Activated CD8-positive, alpha-beta T cell treated with anti-CD3 and anti-CD28 coated beads for 36 hours (primary cell): ENCODE measurements at regions of chr6 and their contacts with region 1.

Region 1: DNA sequence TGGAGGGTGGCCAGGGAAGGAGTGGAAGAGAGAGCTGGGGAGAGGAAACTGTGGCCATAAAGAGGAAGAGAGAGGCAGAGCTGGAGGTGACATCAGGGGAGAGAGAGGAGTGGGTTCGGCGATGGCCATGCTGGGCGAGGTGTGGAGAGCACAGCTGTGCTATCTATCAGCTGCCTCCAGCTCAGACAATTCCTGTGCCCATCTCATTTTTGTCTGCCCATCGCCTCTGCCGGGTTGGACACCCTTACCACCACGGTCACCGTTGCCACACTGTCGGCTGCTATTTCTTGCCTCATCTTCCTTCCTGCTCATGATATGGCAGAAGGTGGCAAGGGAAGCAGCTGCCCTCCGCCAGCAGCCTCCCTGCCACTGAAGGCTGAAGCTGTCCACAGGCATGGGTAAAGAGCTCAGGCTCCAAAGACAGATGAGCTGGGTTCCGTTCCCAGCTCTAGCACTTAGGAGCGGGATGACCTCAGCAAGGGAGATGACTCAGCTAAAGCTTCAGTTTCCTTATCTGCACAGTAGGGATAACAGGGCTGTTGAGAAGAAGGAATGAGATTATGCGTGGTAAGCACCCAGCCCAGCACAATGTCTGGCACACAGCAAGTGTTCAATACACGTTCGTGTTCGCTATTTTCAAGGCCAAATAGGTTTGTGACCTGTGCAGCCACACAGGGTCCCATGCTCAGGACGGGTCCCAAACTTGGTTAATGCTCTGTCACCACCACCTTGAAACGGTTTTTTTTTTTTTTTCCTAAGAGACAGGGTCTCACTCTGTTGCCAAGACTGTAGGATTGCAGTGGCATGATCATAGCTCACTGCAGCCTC is 21.9 kb upstream of the TAF8 start:
- DNase-seq: no peak
- ATAC-seq: peak; percentile 16
- H3K4me3 Mint-ChIP-seq: peak overlapping the region; percentile 71
- H3K27ac Mint-ChIP-seq: peak overlapping the region; percentile 98
- H3K4me1 Mint-ChIP-seq: peaks cover 82% of the 10 kb centered on the region
- H3K27me3 Mint-ChIP-seq: no peaks in the 10 kb centered on the region
- CTCF ChIP-seq: no peak

Region 2: GRCh38 chr6:41966961-41967311 is 61.5 kb before region 1 on chr6:
- CTCF ChIA-PET with region 1: interaction called, 3 read pairs
- POLR2A ChIA-PET with region 1: interaction called, 16 read pairs
- intact Hi-C with region 1: no loop called
- DNase-seq: no peak
- ATAC-seq: no peak
- H3K4me3 Mint-ChIP-seq: no peak overlapping the region
- H3K27ac Mint-ChIP-seq: peak overlapping the region; percentile 92
- H3K4me1 Mint-ChIP-seq: peaks cover 82% of the 10 kb centered on the region
- H3K27me3 Mint-ChIP-seq: no peaks in the 10 kb centered on the region
- CTCF ChIP-seq: no peak